Activated T-helper 1 cell treated with anti-CD3 and anti-CD28 coated beads, Interleukin-12 subunit alpha, Interleukin-12 subunit beta, Interleukin-2, Interleukin-4 antibody, amounts not matched to agents 30 ng/mL and 10 ng/mL and 1 ng/mL, durations not matched to agents 14 hours and 24 hours and 36 hours (primary cell): ENCODE measurements at regions of chr20 and their contacts with region 1.

Region 1: DNA sequence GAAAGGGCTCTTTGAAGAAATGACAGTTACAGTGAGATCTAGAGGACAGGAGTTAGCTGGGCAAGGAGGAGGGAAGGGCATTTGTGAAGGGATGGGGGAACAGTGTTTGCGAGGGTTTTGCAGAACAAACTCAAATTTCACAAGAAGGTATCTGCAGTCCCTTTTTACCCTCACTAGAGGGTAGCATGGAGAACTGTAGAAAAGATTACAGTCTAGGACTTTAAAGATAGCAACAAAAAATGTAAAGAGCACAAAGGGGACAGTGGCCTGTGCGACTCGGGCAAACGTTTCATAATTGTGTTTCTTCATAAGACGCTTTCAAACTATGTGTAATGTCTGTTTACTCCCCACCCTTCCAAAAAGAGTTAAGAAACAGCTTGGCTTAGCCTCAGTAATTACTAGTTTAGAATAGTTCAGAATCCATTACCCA is 21.2 kb upstream of the ASXL1 start:
- DNase-seq: no peak
- H3K4me3 Mint-ChIP-seq: no peak overlapping the region
- H3K27ac Mint-ChIP-seq: no peak overlapping the region
- H3K4me1 Mint-ChIP-seq: peaks cover 39% of the 10 kb centered on the region
- H3K27me3 Mint-ChIP-seq: no peaks in the 10 kb centered on the region

Region 2: DNA sequence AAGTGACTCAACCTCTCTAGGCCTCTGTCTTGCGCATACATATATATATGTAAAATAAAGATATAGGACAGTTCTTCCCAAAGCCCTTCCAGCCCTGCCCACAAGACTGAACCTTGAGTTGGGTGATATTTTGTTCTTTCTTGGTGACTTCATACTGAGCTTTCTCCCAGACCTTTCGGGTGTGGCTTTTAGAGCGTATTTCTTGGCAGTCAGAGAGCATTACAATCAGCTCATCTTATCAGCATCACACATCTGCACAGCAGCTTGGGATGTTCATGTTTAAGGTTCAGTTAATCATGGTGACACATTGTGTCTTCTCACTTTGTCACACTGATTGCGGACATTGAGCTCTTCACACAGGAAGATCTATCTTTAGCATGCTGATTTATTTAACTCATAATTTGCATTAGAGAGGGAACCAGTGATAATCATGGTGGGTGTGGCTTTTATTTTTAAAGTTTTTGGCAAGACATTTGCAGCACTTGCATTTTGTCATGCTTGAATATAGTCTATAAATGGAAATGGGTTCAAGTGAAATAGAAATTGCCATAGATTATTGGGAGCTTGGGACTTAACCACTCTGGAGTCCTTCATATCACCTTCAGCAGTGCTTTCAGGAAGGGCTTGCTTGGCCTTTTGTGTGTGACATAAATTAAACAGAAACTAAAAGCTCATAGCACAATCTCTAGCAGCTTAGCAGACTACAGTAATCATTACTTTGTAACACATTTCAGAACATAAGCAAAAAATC is 51.1 kb before region 1 on chr20:
- intact Hi-C with region 1: loop called (anchors 1 kb)
- DNase-seq: peak; percentile 41
- H3K4me3 Mint-ChIP-seq: peak overlapping the region; percentile 23
- H3K27ac Mint-ChIP-seq: peak overlapping the region; percentile 87
- H3K4me1 Mint-ChIP-seq: peaks cover 75% of the 10 kb centered on the region
- H3K27me3 Mint-ChIP-seq: no peaks in the 10 kb centered on the region

Region 3: GRCh38 chr20:32368925-32369324 is 32.0 kb after region 1 on chr20:
- intact Hi-C with region 1: loop called (anchors 5 kb)
- DNase-seq: no peak
- H3K4me3 Mint-ChIP-seq: peak overlapping the region; percentile 3
- H3K27ac Mint-ChIP-seq: peak overlapping the region; percentile 29
- H3K4me1 Mint-ChIP-seq: peaks cover 48% of the 10 kb centered on the region
- H3K27me3 Mint-ChIP-seq: no peaks in the 10 kb centered on the region

Region 4: DNA sequence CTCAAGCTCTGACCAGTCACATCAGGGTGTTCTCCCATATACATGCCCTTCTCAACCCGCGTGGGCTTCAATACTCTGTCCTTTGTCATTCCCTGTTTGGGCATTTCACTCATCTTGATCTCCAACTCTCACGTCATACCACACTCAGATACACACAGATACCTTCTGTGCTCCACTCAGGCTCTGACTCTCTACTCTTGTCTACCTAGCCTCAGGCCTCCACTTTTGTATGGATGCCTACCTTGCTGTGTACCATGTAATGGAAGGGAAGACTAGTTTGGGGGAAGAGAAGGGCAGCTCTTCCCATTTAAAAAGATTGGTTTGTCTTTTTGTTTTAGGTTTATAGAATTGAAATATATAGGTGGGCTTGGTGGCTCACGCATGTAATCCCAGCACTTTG is 69.8 kb after region 1 on chr20:
- intact Hi-C with region 1: loop called (anchors 2 kb)
- DNase-seq: no peak
- H3K4me3 Mint-ChIP-seq: no peak overlapping the region
- H3K27ac Mint-ChIP-seq: no peak overlapping the region
- H3K4me1 Mint-ChIP-seq: peaks cover 35% of the 10 kb centered on the region
- H3K27me3 Mint-ChIP-seq: no peaks in the 10 kb centered on the region

Region 5: GRCh38 chr20:32484958-32485769 is 148.2 kb after region 1 on chr20:
- intact Hi-C with region 1: loop called (anchors 1 kb)
- DNase-seq: peak; percentile 72
- H3K4me3 Mint-ChIP-seq: peak overlapping the region; percentile 89
- H3K27ac Mint-ChIP-seq: peak overlapping the region; percentile 85
- H3K4me1 Mint-ChIP-seq: peaks cover 21% of the 10 kb centered on the region
- H3K27me3 Mint-ChIP-seq: peaks cover 7% of the 10 kb centered on the region